ENCODE measurements at regions of chr7 and their contacts with region 1.

Region 1: DNA sequence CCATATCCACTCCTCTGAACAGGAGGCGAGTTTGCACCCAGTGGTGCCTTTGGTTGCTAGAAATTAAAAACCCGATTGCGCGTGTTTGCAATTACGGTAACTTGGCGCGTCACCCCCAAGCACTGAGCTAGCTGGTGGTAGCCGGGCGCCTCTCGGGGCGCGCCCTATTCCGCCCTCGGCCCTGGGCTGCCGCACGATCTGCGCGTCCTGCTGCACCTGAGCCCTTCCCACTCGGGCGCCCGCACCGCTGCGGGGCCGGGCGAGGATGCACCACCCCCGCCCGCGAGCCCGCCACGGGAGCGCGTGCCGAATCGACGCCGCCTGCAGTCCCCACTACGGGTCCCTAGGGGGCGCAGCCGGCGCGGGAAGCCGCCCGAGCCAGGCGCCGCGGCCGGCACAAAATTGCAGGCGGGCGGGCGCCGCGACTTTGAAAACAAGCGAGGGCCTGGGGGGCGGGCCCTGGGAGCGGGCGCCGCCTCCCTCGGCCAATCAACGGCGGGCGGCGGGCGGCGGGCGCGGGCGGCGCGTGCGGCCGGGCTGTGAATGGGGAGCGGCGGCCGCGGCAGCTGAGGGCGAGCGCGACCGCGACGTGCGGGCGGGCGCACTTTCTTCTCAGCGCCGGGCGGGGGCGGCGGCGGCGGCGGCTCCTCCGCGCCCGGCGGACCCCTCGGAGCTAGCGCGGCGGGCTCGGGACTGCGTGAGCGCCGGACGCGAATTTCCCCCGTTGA is at the start of gene SDK1:
- DNase-seq: peak; percentile 33
- ATAC-seq: peak; percentile 95
- H3K4me3 ChIP-seq: peak within 1 kb of the TSS; percentile 65 to 91
- H3K27ac ChIP-seq: peak within 1 kb of the TSS; percentile 90
- H3K4me1 ChIP-seq: peaks cover 40% of the 10 kb centered on the region
- H3K27me3 ChIP-seq: no peaks in the 10 kb centered on the region
- CTCF ChIP-seq: peak; percentile 100
- total RNA-seq, gene SDK1: 47.4 TPM

Region 2: GRCh38 chr7:3439333-3440030 is 138.7 kb after region 1 on chr7:
- CTCF ChIA-PET with region 1: no interaction called
- POLR2A ChIA-PET with region 1: no interaction called
- in situ Hi-C with region 1: no loop called
- intact Hi-C with region 1: loop called (anchors 10 kb)
- DNase-seq: peak; percentile 69
- ATAC-seq: peak; percentile 82
- H3K4me3 ChIP-seq: no peak overlapping the region
- H3K27ac ChIP-seq: peak overlapping the region; percentile 78
- H3K4me1 ChIP-seq: peaks cover 40% of the 10 kb centered on the region
- H3K27me3 ChIP-seq: no peaks in the 10 kb centered on the region
- CTCF ChIP-seq: peak; percentile 20; the same call in 1 of the 2 replicates

Region 3: GRCh38 chr7:3897438-3898385 is 596.9 kb after region 1 on chr7:
- CTCF ChIA-PET with region 1: no interaction called
- POLR2A ChIA-PET with region 1: no interaction called
- in situ Hi-C with region 1: no loop called
- intact Hi-C with region 1: loop called (anchors 10 kb)
- DNase-seq: peak; percentile 35
- ATAC-seq: 0 out of 2 replicates have a peak, but pooled peaks have one; percentile 69
- H3K4me3 ChIP-seq: no peak overlapping the region
- H3K27ac ChIP-seq: peak overlapping the region; percentile 58
- H3K4me1 ChIP-seq: peaks cover 3% of the 10 kb centered on the region; the same call in 1 of the 2 replicates
- H3K27me3 ChIP-seq: no peaks in the 10 kb centered on the region
- CTCF ChIP-seq: peak; percentile 89